ENCODE measurements at regions of chr13 and their contacts with region 1.

Region 1: DNA sequence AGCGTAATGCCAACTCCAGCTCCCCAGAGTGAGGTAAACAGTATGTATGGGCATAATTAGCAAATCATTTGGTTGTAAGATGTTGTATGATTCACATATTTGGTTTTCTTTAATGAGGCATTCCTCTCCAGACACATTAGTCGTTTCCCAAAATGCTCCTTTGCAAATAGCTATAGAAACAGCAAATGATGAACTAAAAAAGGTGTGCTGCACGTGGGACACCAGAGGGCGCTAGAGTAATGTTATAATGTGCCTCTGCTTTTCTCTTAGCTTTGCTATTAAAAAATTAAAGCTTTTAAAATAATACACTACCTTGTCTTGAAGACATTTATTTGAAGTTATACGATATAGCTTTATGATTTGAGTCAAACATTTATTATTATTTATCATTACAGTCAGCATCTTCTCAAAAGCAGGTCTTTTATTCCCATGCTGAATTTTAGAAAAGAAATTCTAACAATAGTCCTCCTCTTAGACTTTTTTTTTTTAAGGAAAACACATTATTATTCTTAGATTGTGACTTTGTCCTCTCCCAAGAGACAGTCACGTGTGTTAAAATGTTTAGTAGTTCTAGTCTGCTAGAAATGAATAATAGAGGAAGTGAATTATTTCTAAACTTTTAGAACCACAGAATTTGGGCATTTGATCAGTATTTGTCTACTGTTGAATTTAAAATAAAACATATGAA is 121.6 kb upstream of the FRY start:
- DNase-seq: no peak
- H3K4me3 ChIP-seq: no peak overlapping the region
- CTCF ChIP-seq: peak; percentile 62

Region 2: DNA sequence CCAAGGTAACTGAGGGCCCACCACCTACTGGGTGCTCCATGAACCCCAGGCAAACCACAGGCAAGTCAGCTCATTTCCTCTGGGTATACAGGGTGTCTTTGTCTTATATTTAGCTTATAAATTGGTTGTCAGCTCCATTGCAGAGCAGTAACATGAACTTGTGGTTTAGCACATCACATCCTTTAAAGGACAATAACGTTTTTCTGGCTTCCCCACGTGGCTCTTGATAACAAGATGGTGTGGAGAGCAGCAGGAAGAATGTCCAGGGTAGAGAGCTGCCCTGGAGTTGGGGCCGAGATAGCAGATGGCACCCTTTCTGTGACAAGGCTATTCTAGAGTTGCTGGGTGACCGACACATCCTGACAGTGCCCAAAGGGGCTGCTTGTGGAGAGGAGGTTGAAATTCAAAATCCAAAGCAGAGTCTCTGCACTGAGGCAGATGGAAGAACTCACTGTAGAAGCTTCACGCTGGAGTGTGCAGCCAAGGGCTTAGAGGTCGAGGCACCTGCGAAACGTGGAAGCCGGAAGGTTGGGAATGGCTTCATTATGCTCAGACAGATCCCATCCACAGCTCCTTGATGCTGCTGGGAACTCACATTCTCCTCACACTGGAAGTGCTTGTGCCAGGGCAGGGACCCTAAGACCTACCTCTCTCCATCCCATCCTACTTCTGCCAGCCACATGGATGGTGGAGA is 11.5 kb before region 1 on chr13:
- CTCF ChIA-PET with region 1: interaction called, 23 read pairs
- POLR2A ChIA-PET with region 1: no interaction called
- DNase-seq: no peak
- H3K4me3 ChIP-seq: no peak overlapping the region
- CTCF ChIP-seq: no peak

Region 3: DNA sequence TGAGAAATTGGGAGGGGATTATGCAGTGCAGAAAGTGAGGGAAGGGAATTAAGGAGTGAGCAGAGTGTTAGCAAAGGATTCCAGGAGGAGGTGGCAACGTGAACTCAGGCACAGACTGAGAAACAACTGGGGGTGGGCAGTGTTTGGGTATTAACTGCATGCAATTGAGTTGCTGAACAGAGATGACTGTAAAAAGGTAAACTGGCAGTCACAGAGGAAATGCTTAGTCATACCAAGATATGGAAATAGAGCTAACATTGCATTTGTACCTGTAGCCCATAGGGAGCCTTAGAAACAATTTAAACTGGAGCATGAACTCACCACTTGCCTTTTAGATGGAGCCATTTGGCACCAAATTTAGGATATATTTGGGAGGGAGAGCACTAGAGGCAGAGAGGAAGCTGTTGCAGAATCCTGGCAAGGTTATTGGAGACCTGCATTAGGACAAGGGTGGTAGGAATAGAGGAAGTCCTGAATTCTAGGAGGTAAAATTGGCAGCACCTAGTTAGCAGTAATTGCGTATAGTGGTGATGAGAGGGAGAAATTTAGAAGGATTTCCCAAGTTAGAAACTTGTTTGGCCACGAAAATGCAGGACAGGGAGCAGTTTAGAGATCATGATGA is 21.0 kb after region 1 on chr13:
- CTCF ChIA-PET with region 1: interaction called, 28 read pairs
- POLR2A ChIA-PET with region 1: no interaction called
- DNase-seq: no peak
- H3K4me3 ChIP-seq: no peak overlapping the region
- CTCF ChIP-seq: no peak

Region 4: GRCh38 chr13:32191452-32191998 is 281.5 kb after region 1 on chr13:
- CTCF ChIA-PET with region 1: no interaction called
- POLR2A ChIA-PET with region 1: no interaction called
- DNase-seq: no peak
- H3K4me3 ChIP-seq: no peak overlapping the region
- CTCF ChIP-seq: no peak

Region 5: GRCh38 chr13:32310134-32310706 is 400.2 kb after region 1 on chr13:
- CTCF ChIA-PET with region 1: interaction called, 32 read pairs
- POLR2A ChIA-PET with region 1: no interaction called
- DNase-seq: no peak
- H3K4me3 ChIP-seq: no peak overlapping the region
- CTCF ChIP-seq: peak; percentile 58

Region 6: DNA sequence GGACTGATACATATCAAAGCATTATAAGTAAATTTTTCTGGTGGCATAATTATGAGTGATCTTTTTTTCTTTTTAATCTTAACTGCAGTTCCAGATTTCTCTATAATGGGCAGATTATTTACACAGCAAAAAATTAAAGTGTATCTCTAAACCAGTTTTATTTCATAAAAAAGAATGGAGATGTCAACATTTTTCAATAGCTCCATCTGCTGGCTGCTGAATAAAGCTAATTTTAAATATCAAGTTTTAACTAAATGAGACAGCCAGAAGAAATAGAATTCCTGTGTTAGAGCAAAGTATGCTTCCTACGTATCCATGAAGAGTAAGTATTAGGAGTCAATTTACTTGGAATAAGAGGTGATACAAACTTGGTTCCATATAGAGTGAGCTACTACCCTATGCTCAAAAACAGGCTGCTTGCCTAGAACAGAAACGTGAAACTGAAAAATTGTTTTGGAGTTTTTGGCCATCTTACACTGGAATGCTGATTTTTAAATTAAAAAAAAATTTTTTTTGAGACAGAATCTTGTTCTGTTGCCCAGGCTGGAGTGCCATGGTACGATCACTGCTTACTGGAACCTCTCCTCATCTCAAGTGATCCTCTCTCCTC is 671.3 kb after region 1 on chr13:
- CTCF ChIA-PET with region 1: interaction called, 154 read pairs
- POLR2A ChIA-PET with region 1: no interaction called
- DNase-seq: no peak
- H3K4me3 ChIP-seq: no peak overlapping the region
- CTCF ChIP-seq: peak; percentile 14

Measured in AG04449 (cell line).